Activated CD4-positive, alpha-beta T cell treated with anti-CD3 and anti-CD28 coated beads, Interleukin-2, amount 10 ng/mL, durations not matched to agents 24 days and 14 days (primary cell): ENCODE measurements at regions of chr11 and their contacts with region 1.

Region 1: DNA sequence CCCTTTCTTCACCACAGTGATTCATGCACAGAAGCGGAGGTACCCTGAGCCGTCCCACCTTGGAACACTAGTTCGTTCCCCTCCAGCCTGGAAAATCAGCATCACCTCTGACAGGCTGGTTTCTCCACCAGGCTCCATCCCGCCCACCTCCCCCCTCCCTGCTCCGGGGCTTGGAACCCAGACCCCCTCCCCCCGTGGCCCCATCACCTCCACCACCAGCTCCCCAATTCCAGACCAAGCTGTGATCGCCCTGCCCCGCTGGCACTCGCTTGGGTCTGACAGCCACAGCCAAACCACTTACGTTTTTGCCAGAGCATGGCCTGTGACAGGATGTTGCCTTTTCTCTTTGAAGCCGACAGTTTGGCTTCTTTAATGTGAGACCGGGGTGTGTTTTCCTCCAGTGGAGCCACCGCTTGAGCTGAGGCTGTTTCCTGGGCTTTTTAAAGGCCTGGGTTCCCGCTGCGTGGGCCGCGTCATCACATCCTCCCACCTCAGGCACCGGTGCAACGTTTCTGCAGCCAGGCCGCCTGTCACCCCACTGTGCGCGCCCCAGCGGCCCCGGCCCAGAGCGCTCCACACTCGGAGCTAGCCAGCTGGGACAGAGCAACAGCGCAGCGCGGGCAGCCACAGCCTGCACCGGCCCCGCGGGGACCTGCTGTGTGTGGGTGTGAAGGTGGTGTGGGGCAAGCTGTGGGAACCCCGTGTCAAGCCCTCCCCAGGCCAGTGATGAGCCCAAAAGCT is at the start of gene POU2AF1:
- DNase-seq: peak; percentile 92
- H3K4me3 Mint-ChIP-seq: peak within 1 kb of the TSS; percentile 93
- H3K27ac Mint-ChIP-seq: peak within 1 kb of the TSS; percentile 99
- H3K4me1 Mint-ChIP-seq: peaks cover 61% of the 10 kb centered on the region
- H3K27me3 Mint-ChIP-seq: no peaks in the 10 kb centered on the region
- total RNA-seq, gene POU2AF1: 65.6 and 68.9 TPM in 2 replicates

Region 2: DNA sequence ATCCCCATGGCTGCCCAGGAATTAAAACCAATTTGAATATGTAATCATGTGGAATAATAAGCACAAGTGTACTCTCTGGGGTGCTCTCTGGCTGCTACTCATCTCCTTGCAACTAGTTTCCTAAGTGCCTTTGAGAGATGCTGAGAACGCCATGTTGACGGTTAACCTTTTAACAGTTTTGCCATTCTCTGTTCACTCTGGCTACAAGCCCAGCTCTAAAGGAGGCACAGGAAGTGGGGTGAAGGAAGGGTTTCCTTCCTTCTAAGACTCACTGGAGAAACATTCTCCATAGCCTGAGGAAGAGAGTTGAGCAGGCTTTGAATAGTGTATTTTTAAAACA is 1407.9 kb before region 1 on chr11:
- intact Hi-C with region 1: loop called (anchors 5 kb)
- DNase-seq: peak; percentile 65
- H3K4me3 Mint-ChIP-seq: peak overlapping the region; percentile 72
- H3K27ac Mint-ChIP-seq: peak overlapping the region; percentile 86
- H3K4me1 Mint-ChIP-seq: peaks cover 35% of the 10 kb centered on the region
- H3K27me3 Mint-ChIP-seq: peaks cover 12% of the 10 kb centered on the region

Region 3: GRCh38 chr11:111359223-111360149 is 19.5 kb before region 1 on chr11:
- intact Hi-C with region 1: loop called (anchors 1 kb)
- DNase-seq: peak; percentile 55
- H3K4me3 Mint-ChIP-seq: peak overlapping the region; percentile 12
- H3K27ac Mint-ChIP-seq: no peak overlapping the region
- H3K4me1 Mint-ChIP-seq: peaks cover 15% of the 10 kb centered on the region
- H3K27me3 Mint-ChIP-seq: no peaks in the 10 kb centered on the region

Region 4: GRCh38 chr11:111414267-111414931 is 35.4 kb after region 1 on chr11:
- intact Hi-C with region 1: loop called (anchors 1 kb)
- DNase-seq: peak; percentile 69
- H3K4me3 Mint-ChIP-seq: peak overlapping the region; percentile 80
- H3K27ac Mint-ChIP-seq: peak overlapping the region; percentile 90
- H3K4me1 Mint-ChIP-seq: peaks cover 72% of the 10 kb centered on the region
- H3K27me3 Mint-ChIP-seq: no peaks in the 10 kb centered on the region

Region 5: DNA sequence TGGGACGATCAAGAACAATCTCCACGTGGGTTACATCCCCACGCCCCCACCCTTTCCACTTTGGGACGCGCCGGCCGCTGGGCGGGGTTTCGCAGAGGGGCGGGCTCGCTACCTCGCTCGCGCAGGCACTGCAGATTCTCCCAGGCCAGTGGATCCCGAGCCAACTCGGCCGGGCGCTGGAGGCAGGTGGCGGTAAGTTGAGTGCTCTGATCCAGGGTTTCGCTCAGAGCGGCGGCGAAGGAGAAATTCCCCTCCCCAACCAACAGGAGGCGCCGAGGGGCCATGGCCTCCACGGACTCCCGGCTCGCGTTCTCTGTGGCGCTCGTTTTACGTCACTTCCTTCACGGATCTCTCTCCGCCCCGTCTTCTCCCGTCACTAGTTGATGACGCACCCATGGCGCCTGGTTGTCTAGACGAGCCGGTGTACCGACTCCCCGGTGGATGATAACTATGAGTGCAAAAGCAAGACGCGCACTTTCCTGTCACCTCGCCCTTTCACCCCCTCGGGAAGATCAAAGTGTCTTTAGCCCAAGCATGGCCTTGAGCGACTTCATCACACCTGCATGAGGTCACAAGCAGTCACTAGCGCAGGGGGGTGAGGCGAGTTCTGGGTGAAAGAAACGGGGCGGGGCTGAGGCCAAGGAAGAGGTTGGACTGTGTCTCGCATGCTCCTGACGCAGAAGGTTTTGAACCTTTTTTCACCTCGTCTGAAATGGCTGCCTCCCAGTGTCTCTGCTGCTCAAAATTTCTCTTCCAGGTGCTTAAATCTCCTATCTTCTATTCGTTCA is 500.0 kb after region 1 on chr11 and contains the starts of genes CFAP68 and FDXACB1:
- intact Hi-C with region 1: loop called (anchors 5 kb)
- DNase-seq: peak; percentile 98
- H3K4me3 Mint-ChIP-seq: peak within 1 kb of the TSS; percentile 95
- H3K27ac Mint-ChIP-seq: peak within 1 kb of the TSS; percentile 99
- H3K4me1 Mint-ChIP-seq: peaks cover 10% of the 10 kb centered on the region
- H3K27me3 Mint-ChIP-seq: no peaks in the 10 kb centered on the region
- total RNA-seq, gene CFAP68: 22.6 and 25.5 TPM in 2 replicates
- total RNA-seq, gene FDXACB1: 8.8 and 10.0 TPM in 2 replicates